SK-N-SH (cell line): ENCODE measurements at regions of chr11 and their contacts with region 1.

Region 1: DNA sequence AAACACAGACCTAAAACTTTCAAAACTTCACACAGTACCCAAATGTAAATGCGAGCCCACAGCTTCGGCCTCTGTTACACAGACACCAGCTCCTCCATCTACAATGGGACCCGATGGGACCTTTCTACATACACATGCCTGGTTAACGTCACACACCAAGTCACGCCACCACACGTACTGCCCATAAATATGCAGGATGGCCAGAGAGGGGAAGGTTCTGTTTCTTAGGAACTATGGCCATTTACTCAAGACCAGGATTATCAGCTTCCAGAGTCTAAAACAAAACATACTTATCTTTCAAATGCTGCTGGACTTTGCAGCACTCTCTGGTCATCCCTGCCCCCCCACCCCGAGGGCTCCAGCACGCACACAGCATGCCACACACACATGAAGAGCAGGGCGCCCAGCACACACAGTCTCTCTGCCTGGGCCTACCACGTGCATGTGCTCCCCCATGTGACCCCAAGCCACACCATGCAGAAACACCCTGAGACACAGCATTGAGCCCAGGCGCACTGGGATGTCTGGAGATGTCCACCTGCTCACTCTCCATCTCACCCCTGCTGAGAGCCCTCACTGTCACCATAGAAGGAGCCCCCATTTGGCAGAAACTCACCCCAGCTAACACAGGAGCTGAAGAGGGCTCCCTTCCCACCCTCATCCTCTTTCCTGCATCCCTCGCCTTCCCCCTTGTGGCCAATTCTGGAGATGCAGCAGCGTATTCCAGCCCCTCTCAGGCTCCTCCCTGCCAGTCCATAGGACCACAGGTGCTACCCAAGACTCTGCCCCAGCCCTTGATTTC is 61.8 kb downstream of the SLC22A12 start:
- DNase-seq: peak; percentile 93
- H3K4me3 ChIP-seq: no peak overlapping the region; a peak in 1 of 4 replicates
- H3K27ac ChIP-seq: no peak overlapping the region
- H3K4me1 ChIP-seq: peaks cover 0 to 7% of the 10 kb centered on the region in 2 experiments; a peak in 1 of 4 replicates
- H3K27me3 ChIP-seq: no peaks in the 10 kb centered on the region
- CTCF ChIP-seq: peak; percentile 83
- EP300 ChIP-seq: no peak
- RAD21 ChIP-seq: peak; percentile 93

Region 2: GRCh38 chr11:64240394-64241174 is 412.2 kb before region 1 on chr11 and contains the start of gene FKBP2:
- CTCF ChIA-PET with region 1: no interaction called
- POLR2A ChIA-PET with region 1: no interaction called
- DNase-seq: peak; percentile 97
- H3K4me3 ChIP-seq: peak within 1 kb of the TSS; percentile 78 to 92
- H3K27ac ChIP-seq: peak within 1 kb of the TSS; percentile 94 to 98
- H3K4me1 ChIP-seq: peaks cover 16 to 41% of the 10 kb centered on the region in 2 experiments; a peak in 2 of 4 replicates
- H3K27me3 ChIP-seq: no peaks in the 10 kb centered on the region
- CTCF ChIP-seq: no peak
- EP300 ChIP-seq: no peak
- RAD21 ChIP-seq: no peak
- polyA plus RNA-seq, gene FKBP2: 84.8 and 127 TPM in 2 replicates

Region 3: GRCh38 chr11:64458997-64459396 is 193.8 kb before region 1 on chr11:
- CTCF ChIA-PET with region 1: interaction called, 121 read pairs
- POLR2A ChIA-PET with region 1: no interaction called
- DNase-seq: no peak
- H3K4me3 ChIP-seq: no peak overlapping the region
- H3K27ac ChIP-seq: no peak overlapping the region
- H3K4me1 ChIP-seq: no peaks in the 10 kb centered on the region; a peak in 1 of 4 replicates
- H3K27me3 ChIP-seq: no peaks in the 10 kb centered on the region
- CTCF ChIP-seq: no peak
- EP300 ChIP-seq: no peak
- RAD21 ChIP-seq: no peak

Region 4: GRCh38 chr11:64533501-64534261 is 119.1 kb before region 1 on chr11:
- CTCF ChIA-PET with region 1: interaction called, 10 read pairs
- POLR2A ChIA-PET with region 1: no interaction called
- DNase-seq: no peak
- H3K4me3 ChIP-seq: no peak overlapping the region
- H3K27ac ChIP-seq: no peak overlapping the region
- H3K4me1 ChIP-seq: peaks cover 0 to 3% of the 10 kb centered on the region in 2 experiments; a peak in 1 of 4 replicates
- H3K27me3 ChIP-seq: peaks cover 23% of the 10 kb centered on the region; the same call in 1 of the 2 replicates
- CTCF ChIP-seq: no peak
- EP300 ChIP-seq: no peak
- RAD21 ChIP-seq: no peak

Region 5: GRCh38 chr11:64566042-64566914 is 86.5 kb before region 1 on chr11:
- CTCF ChIA-PET with region 1: interaction called, 30 read pairs
- POLR2A ChIA-PET with region 1: no interaction called
- DNase-seq: peak; percentile 90
- H3K4me3 ChIP-seq: no peak overlapping the region; a peak in 1 of 4 replicates
- H3K27ac ChIP-seq: peak overlapping the region in 1 of 2 experiments; percentile 89; a peak in 2 of 4 replicates
- H3K4me1 ChIP-seq: peaks cover 0 to 19% of the 10 kb centered on the region in 2 experiments; a peak in 2 of 4 replicates
- H3K27me3 ChIP-seq: no peaks in the 10 kb centered on the region
- CTCF ChIP-seq: no peak
- EP300 ChIP-seq: no peak
- RAD21 ChIP-seq: no peak

Region 6: DNA sequence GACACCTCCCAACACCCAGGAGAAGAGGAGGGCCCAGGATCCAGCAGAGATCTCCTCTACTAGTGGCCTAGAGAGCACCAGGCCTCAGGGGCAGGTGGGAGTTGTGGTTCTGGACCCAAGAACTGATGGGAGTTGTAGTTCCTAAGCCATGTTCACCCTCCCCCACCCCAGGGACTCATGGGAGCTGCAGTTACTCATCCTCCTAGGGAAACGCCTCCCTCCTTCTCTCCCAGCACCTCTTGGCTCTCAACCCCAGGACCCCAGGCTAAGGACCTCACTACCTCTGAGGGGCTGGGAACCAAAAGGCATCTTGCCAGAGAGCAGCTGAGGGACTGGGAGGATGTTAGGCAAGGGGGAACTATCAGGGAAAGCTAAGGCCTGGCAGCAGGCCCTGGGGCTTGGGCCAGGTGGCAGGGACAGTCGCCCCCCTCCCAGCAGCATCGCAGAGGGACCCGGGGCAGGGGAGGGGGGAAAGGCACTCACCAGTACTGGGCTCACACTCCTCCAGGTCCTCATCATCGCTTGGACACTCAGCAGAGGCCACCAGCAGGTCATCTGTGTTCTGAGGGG is 32.9 kb before region 1 on chr11:
- CTCF ChIA-PET with region 1: interaction called, 10 read pairs
- POLR2A ChIA-PET with region 1: no interaction called
- DNase-seq: peak; percentile 70
- H3K4me3 ChIP-seq: no peak overlapping the region
- H3K27ac ChIP-seq: peak overlapping the region in 1 of 2 experiments; percentile 95; a peak in 2 of 4 replicates
- H3K4me1 ChIP-seq: peaks cover 0 to 43% of the 10 kb centered on the region in 2 experiments; a peak in 2 of 4 replicates
- H3K27me3 ChIP-seq: 0 out of 2 replicates have a peak, but pooled peaks cover 10% of the 10 kb centered on the region
- CTCF ChIP-seq: no peak
- EP300 ChIP-seq: no peak
- RAD21 ChIP-seq: no peak

Region 7: DNA sequence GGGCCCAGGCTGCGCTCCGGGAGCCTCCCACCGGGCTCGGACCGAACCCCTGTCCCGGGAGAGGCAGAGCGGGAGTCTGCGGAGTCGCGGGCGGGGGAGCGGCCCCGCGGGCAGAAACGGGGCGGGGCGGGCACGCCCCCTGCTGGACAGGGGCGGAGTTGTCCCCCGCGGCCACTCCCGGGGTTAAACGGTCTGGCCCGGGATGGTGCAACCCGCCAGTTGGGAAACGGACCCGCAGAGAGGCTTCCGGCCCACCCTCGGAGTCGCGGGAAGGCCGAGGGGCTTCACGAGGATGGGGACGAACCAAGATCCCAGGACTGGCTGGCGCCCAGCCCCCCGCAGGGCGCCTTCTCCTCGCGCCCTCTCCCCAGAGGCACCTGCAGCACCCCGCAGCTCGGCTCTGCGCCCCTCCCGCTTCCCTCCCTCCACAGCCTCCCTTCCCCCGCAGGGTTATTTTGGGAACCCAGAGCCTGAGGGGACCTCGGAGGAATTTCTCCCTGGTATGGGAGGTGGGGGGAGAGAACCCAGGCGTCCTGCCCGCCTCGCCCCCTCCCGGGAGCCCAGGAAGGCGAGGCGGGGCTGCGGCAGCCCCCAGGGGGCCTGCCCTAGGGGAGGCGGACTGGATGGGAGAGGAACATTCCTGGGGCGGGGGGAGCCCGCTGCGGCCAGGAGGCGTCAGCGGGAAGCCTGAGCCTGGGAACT is 90.3 kb after region 1 on chr11:
- CTCF ChIA-PET with region 1: interaction called, 16 read pairs
- POLR2A ChIA-PET with region 1: interaction called, 3 read pairs
- DNase-seq: peak; percentile 93
- H3K4me3 ChIP-seq: peak overlapping the region; percentile 49 to 50
- H3K27ac ChIP-seq: no peak overlapping the region
- H3K4me1 ChIP-seq: peaks cover 16 to 17% of the 10 kb centered on the region in 2 experiments; a peak in 2 of 4 replicates
- H3K27me3 ChIP-seq: peaks cover 8% of the 10 kb centered on the region; the same call in 1 of the 2 replicates
- CTCF ChIP-seq: peak; percentile 73
- EP300 ChIP-seq: no peak
- RAD21 ChIP-seq: peak; percentile 50